ENCODE measurements at regions of chr1 and their contacts with region 1.

Region 1: DNA sequence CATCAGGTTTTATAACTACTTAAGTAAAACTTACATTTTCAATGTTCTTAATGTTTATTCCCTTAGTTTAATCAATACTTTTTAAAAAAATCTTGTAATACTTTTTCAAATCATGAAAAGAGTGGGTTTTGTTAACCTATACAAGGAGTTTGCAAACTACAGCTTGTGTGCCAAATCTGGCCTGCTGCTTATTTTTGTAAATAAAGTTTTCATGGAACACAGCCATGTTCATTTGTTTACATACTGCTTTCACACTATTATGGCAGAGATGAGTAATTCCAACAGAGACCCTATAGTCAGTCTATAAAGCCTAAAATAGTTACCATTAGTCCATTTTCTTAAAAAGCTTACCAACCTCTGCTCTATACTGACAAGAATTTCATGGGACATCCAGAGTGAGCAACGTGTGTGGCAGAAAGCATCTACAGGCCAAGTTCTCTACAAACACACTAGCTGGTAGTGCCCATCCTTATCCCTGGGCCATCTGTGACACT is 42.6 kb downstream of the ERO1B start:
- DNase-seq: no peak
- ATAC-seq: no peak
- H3K4me3 ChIP-seq: no peak overlapping the region
- H3K4me3 Mint-ChIP-seq: no peak overlapping the region
- H3K27ac ChIP-seq: no peak overlapping the region
- H3K27ac Mint-ChIP-seq: no peak overlapping the region
- H3K4me1 ChIP-seq: no peaks in the 10 kb centered on the region
- H3K4me1 Mint-ChIP-seq: no peaks in the 10 kb centered on the region
- H3K27me3 ChIP-seq: no peaks in the 10 kb centered on the region
- H3K27me3 Mint-ChIP-seq: no peaks in the 10 kb centered on the region

Region 2: DNA sequence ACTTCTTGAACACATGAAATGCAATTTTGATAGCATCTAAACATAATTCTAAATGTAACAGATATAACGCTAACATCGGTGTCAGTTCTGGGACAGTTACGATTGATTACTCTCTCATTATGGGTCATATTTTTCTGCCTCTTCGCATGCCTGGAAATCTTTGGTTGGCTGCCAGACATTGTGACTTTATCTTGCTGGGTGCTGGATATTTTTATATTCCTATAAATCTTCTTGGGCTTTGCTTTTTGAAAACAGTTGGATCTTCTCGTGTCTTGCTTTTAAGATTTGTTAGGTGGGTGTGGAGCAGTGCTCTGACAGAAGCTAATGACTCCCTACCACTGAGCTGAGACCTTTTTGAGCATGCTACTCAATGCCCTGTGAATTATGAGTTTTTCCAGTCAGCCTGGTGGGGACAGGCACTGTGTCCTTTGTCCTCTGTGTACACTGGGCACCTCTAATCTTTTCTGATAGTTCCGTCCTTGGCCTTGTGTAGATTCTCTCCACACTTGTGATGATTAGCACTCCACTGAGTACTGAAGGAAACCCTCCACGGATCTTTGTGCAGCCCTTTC is 126.9 kb after region 1 on chr1:
- CTCF ChIA-PET with region 1: no interaction called
- POLR2A ChIA-PET with region 1: no interaction called
- DNase-seq: no peak
- ATAC-seq: no peak
- H3K4me3 ChIP-seq: no peak overlapping the region
- H3K4me3 Mint-ChIP-seq: no peak overlapping the region
- H3K27ac ChIP-seq: no peak overlapping the region
- H3K27ac Mint-ChIP-seq: no peak overlapping the region
- H3K4me1 ChIP-seq: no peaks in the 10 kb centered on the region
- H3K4me1 Mint-ChIP-seq: no peaks in the 10 kb centered on the region
- H3K27me3 ChIP-seq: no peaks in the 10 kb centered on the region
- H3K27me3 Mint-ChIP-seq: peaks cover 0 to 2% of the 10 kb centered on the region in 2 donors

Region 3: DNA sequence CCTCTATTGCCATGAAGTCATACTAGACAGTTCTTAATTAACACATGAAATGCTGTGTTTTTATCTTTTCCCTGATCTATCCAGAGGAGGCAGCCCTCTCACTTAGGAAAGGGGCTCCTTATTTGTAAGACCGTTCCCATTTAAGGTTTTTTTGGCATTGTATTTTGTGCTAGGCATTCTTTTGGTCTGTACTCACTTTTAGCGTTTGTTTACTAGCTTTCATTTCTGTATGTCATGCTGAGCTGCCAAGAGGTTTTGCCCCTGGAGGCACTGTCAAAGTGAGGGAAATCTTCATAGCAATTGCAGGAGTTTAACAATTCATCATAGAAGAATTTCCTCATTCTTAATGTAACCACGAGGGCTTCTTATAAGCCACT is 615.5 kb after region 1 on chr1:
- CTCF ChIA-PET with region 1: no interaction called
- POLR2A ChIA-PET with region 1: interaction called in 1 of 2 experiments, 15 read pairs
- DNase-seq: no peak
- ATAC-seq: no peak
- H3K4me3 ChIP-seq: no peak overlapping the region
- H3K4me3 Mint-ChIP-seq: no peak overlapping the region
- H3K27ac ChIP-seq: no peak overlapping the region
- H3K27ac Mint-ChIP-seq: no peak overlapping the region
- H3K4me1 ChIP-seq: no peaks in the 10 kb centered on the region
- H3K4me1 Mint-ChIP-seq: peaks cover 0 to 3% (median 2%) of the 10 kb centered on the region in 3 donors
- H3K27me3 ChIP-seq: no peaks in the 10 kb centered on the region
- H3K27me3 Mint-ChIP-seq: no peaks in the 10 kb centered on the region

Region 4: GRCh38 chr1:236966636-236967035 is 727.5 kb after region 1 on chr1:
- CTCF ChIA-PET with region 1: no interaction called
- POLR2A ChIA-PET with region 1: interaction called in 1 of 2 experiments, 25 read pairs
- DNase-seq: no peak
- ATAC-seq: no peak
- H3K4me3 ChIP-seq: no peak overlapping the region
- H3K4me3 Mint-ChIP-seq: no peak overlapping the region
- H3K27ac ChIP-seq: no peak overlapping the region
- H3K27ac Mint-ChIP-seq: no peak overlapping the region
- H3K4me1 ChIP-seq: no peaks in the 10 kb centered on the region
- H3K4me1 Mint-ChIP-seq: no peaks in the 10 kb centered on the region
- H3K27me3 ChIP-seq: peaks cover 0 to 6% of the 10 kb centered on the region in 2 experiments
- H3K27me3 Mint-ChIP-seq: peaks cover 12 to 35% of the 10 kb centered on the region in 2 donors